ENCODE measurements at regions of chr2 and their contacts with region 1.

Region 1: GRCh38 chr2:18149645-18150246 is 271.3 kb downstream of the KCNS3 start:
- DNase-seq: no peak
- ATAC-seq: peak; percentile 53 to 70
- H3K4me3 ChIP-seq: no peak overlapping the region
- H3K27ac ChIP-seq: no peak overlapping the region
- H3K4me1 ChIP-seq: peaks cover 5 to 15% of the 10 kb centered on the region in 2 donors
- H3K27me3 ChIP-seq: no peaks in the 10 kb centered on the region
- CTCF ChIP-seq: peak; percentile 44 to 80 (median 62)
- POLR2A ChIP-seq: no peak

Region 2: DNA sequence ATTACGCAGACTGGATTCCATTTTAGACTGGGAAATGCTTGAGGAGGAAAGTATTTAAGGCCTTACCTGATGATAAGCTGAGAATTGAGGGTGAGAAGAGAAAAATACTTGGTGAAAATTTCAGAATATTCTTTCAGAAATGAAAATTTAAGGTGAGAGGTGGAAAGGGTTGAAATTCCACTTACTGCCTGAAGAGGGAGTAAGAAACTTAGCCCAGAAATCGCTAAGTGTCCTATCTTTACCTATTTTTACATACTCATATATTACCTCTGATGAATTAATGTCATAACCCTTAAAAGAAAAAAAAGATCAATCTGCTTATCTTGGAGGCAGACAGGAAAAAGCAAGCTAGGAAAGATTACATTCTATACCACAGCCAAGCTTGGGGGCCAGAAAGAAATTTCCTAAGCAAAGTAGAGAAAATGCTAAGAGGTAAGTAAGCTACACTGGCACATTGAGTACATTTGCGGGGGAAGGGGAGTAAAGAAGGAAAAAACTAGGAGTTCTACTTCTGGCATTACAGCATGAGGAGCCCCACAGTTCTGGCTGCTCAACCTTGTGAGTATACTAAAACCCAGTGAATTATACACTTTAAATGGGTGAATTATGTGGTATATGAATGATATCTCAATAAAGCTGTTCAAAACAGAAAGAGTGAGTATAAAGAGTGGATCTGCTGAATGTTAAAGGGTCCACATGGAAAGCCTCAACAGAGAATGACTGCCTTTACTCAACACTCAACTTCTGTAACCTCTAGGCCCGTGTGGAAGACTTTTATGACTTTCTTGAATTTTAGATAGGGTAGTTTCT is 430.0 kb before region 1 on chr2:
- in situ Hi-C with region 1: loop called in 2 of 4 experiments (anchors 25 kb)
- intact Hi-C with region 1: no loop called
- DNase-seq: no peak
- ATAC-seq: no peak
- H3K4me3 ChIP-seq: no peak overlapping the region
- H3K27ac ChIP-seq: no peak overlapping the region
- H3K4me1 ChIP-seq: no peaks in the 10 kb centered on the region
- H3K27me3 ChIP-seq: no peaks in the 10 kb centered on the region
- CTCF ChIP-seq: peak; percentile 56 to 80 (median 67)
- POLR2A ChIP-seq: no peak

Measured in gastrocnemius medialis (tissue), 4 donors.